HCT116 (cell line): ENCODE measurements at regions of chrX and their contacts with region 1.

Region 1: DNA sequence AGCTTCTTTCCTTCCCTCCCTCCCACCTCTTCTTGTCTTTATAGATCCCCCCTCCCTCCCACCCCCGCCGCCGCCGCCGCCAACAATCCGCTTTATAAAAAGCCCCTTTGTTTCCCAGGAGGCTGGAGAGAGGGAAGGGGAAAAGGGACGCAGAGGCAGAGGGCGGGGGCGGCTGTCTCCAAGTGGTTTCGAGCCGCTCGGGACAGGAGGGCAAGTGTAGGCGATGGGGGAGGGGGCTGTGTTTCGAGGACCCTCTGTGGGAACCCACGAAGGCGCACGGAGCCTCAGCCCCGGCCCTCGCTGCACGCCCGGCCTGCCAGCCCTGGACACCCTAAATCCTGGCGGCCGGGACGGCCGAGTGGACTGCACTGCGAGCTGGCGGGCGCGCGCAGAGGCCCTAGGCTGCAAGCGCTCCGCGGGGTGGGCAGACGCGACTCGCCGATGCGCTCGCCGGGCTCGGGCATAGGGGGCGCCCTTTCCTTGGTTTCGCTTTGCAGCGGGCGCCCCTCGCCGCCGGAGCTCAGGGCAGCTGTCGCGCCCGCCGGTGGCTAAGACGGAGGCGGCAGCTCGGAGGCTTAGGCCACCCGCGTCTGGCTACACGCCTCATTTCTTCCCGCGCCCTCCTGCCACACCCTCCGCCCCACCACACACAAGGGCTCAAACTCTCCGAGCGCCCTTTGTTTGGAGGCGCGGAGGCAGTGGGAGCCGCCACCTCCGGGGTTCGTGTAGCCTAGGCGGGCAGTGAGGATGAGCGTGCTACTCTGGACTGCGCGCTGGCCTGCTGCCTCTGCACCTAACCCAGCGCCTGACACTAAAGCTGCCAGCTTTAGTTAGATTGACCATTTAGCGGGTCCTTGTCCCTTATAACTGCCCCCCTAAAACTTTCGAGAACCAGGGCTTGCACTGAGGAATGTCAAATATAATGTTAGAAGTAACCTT is 2.2 kb downstream of the MAMLD1 start:
- DNase-seq: peak; percentile 35
- ATAC-seq: peak; percentile 63
- H3K4me3 ChIP-seq: peak overlapping the region; percentile 55 to 64
- H3K27ac ChIP-seq: no peak overlapping the region
- H3K4me1 ChIP-seq: peaks cover 2 to 10% of the 10 kb centered on the region in 2 experiments; a peak in 1 of 4 replicates
- H3K27me3 ChIP-seq: no peaks in the 10 kb centered on the region
- CTCF ChIP-seq: peak in 2 of 3 experiments; percentile 40 to 55; a peak in 4 of 6 replicates
- POLR2A ChIP-seq: no peak
- RAD21 ChIP-seq: no peak

Region 2: GRCh38 chrX:150032741-150033140 is 332.6 kb before region 1 on chrX:
- CTCF ChIA-PET with region 1: no interaction called
- POLR2A ChIA-PET with region 1: no interaction called
- RAD21 ChIA-PET with region 1: no interaction called
- intact Hi-C with region 1: loop called (anchors 10 kb)
- DNase-seq: no peak
- ATAC-seq: peak; percentile 57
- H3K4me3 ChIP-seq: no peak overlapping the region
- H3K27ac ChIP-seq: no peak overlapping the region
- H3K4me1 ChIP-seq: peaks cover 23 to 40% of the 10 kb centered on the region in 2 experiments
- H3K27me3 ChIP-seq: no peaks in the 10 kb centered on the region
- CTCF ChIP-seq: no peak
- POLR2A ChIP-seq: no peak
- RAD21 ChIP-seq: no peak

Region 3: GRCh38 chrX:150486011-150486410 is 120.7 kb after region 1 on chrX:
- CTCF ChIA-PET with region 1: interaction called, 4 read pairs
- POLR2A ChIA-PET with region 1: interaction called, 3 read pairs
- RAD21 ChIA-PET with region 1: no interaction called
- intact Hi-C with region 1: loop called (anchors 5 kb)
- DNase-seq: peak; percentile 24
- ATAC-seq: peak; percentile 86
- H3K4me3 ChIP-seq: no peak overlapping the region
- H3K27ac ChIP-seq: no peak overlapping the region
- H3K4me1 ChIP-seq: peaks cover 3 to 16% of the 10 kb centered on the region in 2 experiments; a peak in 3 of 4 replicates
- H3K27me3 ChIP-seq: no peaks in the 10 kb centered on the region
- CTCF ChIP-seq: peak; percentile 55 to 77 (median 61)
- POLR2A ChIP-seq: no peak
- RAD21 ChIP-seq: peak; percentile 59